GM10248 (cell line): ENCODE measurements at regions of chr1 and their contacts with region 1.

Region 1: GRCh38 chr1:153352523-153352922 is 3.9 kb upstream of the PGLYRP4 start:
- DNase-seq: peak; percentile 75
- CTCF ChIP-seq: peak; percentile 93

Region 2: DNA sequence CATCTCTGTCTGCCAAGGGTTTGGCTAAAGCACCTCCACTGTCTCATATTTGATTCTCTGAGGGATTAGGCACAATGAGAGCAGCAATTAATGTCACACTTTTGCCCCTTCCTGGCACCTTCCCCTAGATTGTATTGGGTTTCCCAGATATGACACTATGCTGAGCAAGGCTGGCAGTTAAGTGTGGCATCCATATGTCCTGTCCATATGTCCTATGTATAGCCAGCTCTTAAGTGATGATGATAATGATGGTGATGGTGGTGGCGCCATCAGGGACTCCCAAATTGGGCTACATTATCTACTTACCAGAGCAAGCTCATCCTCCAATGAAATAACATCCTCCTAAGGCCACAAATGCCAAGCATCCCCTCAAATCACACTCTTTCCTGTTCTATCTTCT is 106.5 kb before region 1 on chr1:
- CTCF ChIA-PET with region 1: no interaction called
- POLR2A ChIA-PET with region 1: no interaction called
- DNase-seq: no peak
- CTCF ChIP-seq: no peak

Region 3: GRCh38 chr1:153337980-153338853 is 14.3 kb before region 1 on chr1:
- CTCF ChIA-PET with region 1: interaction called, 57 read pairs
- POLR2A ChIA-PET with region 1: no interaction called
- DNase-seq: no peak
- CTCF ChIP-seq: no peak

Region 4: DNA sequence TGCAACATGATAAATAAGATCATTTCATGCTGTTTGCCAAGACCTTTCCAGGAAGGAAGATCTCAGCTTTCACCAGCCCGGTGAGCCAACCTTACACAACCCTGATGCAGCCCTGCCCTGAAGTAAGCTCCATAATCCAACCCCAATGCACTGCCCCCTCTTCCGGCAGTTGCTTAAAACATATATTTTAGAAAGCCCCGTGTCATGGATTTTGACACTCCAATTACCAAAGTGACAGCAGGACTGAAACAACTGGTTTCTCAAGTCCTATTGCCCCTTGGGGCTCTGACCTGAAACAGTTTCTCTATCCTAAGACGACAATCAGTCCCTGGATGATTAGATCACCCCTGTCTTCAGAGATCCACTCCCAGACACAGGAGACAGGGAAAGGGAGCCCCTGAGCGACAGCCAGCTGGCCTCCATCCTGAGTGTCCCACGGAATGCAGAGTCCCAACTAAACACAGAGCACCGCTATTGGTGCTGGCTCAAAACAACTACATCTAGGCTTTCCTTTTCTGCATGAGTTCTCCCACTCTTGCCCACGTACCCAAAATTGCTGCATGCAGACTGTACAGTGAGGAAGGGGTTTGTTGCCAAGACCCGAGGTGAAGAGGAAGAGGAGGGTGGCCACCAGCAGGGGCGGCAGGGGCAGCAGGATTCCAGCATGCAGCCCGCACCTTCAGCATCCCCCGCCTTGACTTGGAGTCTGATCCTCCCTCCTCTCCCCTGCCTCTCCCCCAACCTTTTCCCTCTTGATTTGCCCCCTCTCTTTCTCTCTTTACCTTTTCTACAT is 13.0 kb after region 1 on chr1:
- CTCF ChIA-PET with region 1: interaction called, 18 read pairs
- POLR2A ChIA-PET with region 1: no interaction called
- DNase-seq: no peak
- CTCF ChIP-seq: no peak

Region 5: DNA sequence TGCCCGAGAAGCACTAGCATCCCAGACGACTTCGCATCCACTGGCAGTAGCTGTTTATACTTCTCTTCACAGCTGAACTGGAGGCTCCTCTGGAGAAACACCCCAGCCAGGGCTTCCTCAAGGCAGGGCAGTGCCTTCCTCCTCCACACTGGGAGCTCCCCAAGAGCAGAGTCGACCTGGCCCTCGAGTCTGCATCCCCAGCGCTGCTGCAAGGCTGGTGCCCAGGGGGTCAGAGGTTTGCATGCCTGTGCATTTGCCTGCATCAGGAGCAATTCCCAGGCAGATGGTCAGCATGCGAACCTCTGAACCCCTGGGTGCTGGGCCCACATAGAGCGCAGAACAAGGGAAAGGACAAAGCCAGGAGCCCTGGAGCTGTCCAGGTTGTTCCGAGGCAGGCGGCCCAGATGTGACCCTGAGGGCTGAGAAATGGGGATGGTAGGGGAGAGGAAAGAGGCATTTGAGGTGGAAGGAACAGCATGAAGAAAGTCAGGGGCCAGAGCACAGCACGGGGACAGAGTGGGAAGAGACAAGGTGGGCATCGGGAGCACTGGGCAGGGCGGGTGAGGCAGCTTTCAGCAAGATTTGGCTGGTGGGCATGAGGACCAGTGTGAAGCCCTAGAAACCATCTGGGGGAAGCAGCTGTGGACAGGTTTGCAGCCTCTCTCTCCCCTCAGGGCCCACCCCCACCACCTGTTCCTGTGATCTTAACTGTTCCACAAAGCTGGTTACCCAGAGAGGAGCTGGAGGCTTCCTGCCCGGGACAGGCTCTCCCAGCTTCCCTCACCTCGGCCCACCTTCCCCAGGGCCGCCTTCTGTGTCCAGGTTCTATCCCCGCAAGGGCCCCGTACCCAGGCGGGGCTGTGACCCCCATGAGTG is 44.8 kb after region 1 on chr1:
- CTCF ChIA-PET with region 1: interaction called, 14 read pairs
- POLR2A ChIA-PET with region 1: no interaction called
- DNase-seq: no peak
- CTCF ChIP-seq: no peak

Region 6: DNA sequence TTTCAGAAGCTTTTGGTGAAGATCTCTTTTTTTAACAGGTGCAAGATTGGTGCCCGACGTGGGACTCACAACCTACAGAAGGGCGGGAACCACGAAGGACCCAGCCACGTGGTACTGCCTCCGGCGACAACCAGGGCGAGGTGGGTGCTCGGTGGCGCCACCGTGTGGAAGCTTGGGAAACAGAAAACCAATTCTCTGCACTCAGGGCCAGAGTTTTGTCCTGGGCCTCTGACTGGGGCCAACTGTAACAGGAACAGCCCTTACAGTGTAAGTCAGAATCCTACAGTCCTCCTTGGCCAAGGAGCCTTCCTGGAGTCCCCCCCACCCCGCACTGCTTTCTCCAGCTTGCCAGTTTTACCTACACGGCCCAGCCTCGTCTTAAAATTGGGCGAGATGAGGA is 52.2 kb after region 1 on chr1:
- CTCF ChIA-PET with region 1: interaction called, 14 read pairs
- POLR2A ChIA-PET with region 1: no interaction called
- DNase-seq: peak; percentile 47
- CTCF ChIP-seq: peak; percentile 42

Region 7: GRCh38 chr1:153485863-153486262 is 133.3 kb after region 1 on chr1:
- CTCF ChIA-PET with region 1: interaction called, 331 read pairs
- POLR2A ChIA-PET with region 1: no interaction called
- DNase-seq: no peak
- CTCF ChIP-seq: no peak

Region 8: GRCh38 chr1:153494976-153495535 is 142.5 kb after region 1 on chr1:
- CTCF ChIA-PET with region 1: interaction called, 331 read pairs
- POLR2A ChIA-PET with region 1: no interaction called
- DNase-seq: peak; percentile 65
- CTCF ChIP-seq: peak; percentile 86